Endothelial cell of umbilical vein (primary cell): ENCODE measurements at regions of chr15 and their contacts with region 1.

Region 1: DNA sequence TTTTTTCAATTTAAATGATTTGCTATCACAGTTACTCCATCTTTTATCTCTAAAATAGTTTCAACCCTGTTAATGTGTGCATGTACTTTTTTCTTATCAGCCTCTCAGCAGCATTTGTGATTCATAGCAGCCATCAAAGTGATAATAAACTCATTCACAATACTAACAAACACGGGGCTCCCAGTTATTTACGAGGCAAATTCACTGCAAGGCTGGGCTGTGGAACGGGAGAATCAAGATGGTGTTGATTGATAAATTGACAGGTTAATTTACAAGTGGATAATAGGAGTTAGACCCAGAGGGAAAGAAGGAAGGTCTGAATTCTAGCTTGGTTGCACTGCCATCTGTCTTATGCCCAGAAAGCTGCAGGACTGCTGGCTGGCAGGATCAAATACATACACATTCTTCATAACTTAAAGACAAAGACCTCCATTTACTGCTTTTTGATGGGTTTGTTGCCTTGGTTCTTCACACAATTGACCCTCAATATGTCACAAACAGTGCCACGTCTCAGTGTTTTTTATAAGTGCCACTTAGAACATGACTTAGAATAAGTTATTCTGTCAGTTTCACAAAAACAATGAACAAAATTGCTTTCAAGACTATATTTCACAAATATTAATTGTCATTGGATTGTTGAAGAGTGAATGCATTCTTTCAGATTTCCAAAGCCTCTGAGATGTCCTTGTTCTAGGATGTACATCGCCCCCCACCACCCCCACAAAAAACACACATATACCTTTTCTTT is 562.8 kb downstream of the NR2F2 start:
- DNase-seq: peak; percentile 80
- H3K4me3 ChIP-seq: no peak overlapping the region
- H3K27ac ChIP-seq: no peak overlapping the region
- H3K4me1 ChIP-seq: peaks cover 4% of the 10 kb centered on the region
- H3K27me3 ChIP-seq: no peaks in the 10 kb centered on the region
- CTCF ChIP-seq: peak; percentile 62 to 70
- POLR2A ChIP-seq: no peak

Region 2: DNA sequence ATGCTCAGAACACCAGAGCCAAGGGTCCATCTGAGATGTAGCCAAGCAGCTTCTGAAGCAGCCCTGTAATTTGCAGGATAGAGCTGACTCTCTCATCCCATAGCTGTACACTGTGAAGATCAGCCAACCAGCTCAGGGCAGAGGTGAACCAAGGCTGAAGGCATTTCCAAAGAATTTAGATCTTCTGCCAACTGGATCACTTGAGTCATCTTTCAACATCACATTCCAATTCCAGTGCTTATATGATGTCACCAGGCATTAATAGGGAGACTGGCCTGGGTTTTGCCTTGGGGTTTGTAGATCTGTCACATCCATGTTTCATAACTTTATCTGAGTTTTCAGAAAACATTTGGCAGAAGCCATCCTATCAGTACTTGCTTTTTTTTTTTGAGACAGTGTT is 464.6 kb before region 1 on chr15:
- CTCF ChIA-PET with region 1: no interaction called
- POLR2A ChIA-PET with region 1: no interaction called
- dilution Hi-C with region 1: no loop called
- intact Hi-C with region 1: loop called (anchors 10 kb)
- DNase-seq: peak; percentile 58
- H3K4me3 ChIP-seq: no peak overlapping the region
- H3K27ac ChIP-seq: peak overlapping the region; percentile 28
- H3K4me1 ChIP-seq: peaks cover 17% of the 10 kb centered on the region
- H3K27me3 ChIP-seq: no peaks in the 10 kb centered on the region
- CTCF ChIP-seq: no peak
- POLR2A ChIP-seq: no peak

Region 3: GRCh38 chr15:96585484-96586386 is 307.6 kb before region 1 on chr15:
- CTCF ChIA-PET with region 1: interaction called, 5 read pairs
- POLR2A ChIA-PET with region 1: no interaction called
- dilution Hi-C with region 1: no loop called
- intact Hi-C with region 1: loop called (anchors 5 kb)
- DNase-seq: peak; percentile 39
- H3K4me3 ChIP-seq: no peak overlapping the region
- H3K27ac ChIP-seq: no peak overlapping the region
- H3K4me1 ChIP-seq: no peaks in the 10 kb centered on the region
- H3K27me3 ChIP-seq: peaks cover 0 to 2% of the 10 kb centered on the region in 2 experiments
- CTCF ChIP-seq: peak in 1 of 2 donors; percentile 33
- POLR2A ChIP-seq: no peak

Region 4: DNA sequence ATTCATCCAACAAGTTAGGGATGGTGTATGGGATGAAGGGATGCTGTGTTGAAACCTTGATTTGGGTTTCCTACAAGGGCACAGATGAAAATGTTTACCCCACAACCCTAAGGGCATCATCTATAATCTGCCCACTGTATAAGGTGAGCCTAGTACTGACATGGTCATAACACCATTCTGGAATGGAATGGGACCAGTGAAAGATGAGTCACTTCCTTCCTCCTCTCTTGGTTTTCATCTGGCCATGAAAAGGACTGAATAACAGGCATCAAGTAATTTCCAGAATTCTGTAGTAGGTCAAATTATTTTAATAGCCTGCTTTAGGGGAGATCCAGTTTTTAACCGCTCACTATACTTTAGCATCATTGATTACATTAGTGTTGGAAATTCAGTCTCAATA is 24.2 kb before region 1 on chr15:
- CTCF ChIA-PET with region 1: no interaction called
- POLR2A ChIA-PET with region 1: no interaction called
- dilution Hi-C with region 1: no loop called
- intact Hi-C with region 1: loop called (anchors 1 kb)
- DNase-seq: peak; percentile 27
- H3K4me3 ChIP-seq: no peak overlapping the region
- H3K27ac ChIP-seq: no peak overlapping the region
- H3K4me1 ChIP-seq: peaks cover 8% of the 10 kb centered on the region
- H3K27me3 ChIP-seq: no peaks in the 10 kb centered on the region
- CTCF ChIP-seq: no peak
- POLR2A ChIP-seq: no peak

Region 5: DNA sequence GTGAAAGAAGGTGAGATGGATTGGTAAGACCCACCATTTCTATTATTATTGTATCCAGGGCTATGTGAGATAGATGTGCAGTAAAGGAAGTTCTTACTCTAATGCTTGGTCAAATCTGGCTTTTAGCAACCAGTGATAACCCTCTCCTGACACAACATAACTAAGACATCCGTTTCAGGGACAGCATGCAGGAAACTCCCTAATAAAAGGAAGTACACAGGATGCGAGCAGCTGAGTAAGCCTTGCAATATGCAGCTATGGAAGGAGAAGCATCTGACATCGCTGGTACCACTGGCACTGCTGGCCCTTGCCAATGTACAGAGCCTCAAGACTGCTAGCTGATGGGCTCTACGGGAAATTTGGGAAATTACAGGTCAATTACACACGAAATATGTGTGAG is 99.5 kb after region 1 on chr15:
- CTCF ChIA-PET with region 1: no interaction called
- POLR2A ChIA-PET with region 1: interaction called, 4 read pairs
- dilution Hi-C with region 1: no loop called
- intact Hi-C with region 1: loop called (anchors 2 kb)
- DNase-seq: peak; percentile 87
- H3K4me3 ChIP-seq: no peak overlapping the region
- H3K27ac ChIP-seq: peak overlapping the region; percentile 86
- H3K4me1 ChIP-seq: peaks cover 28% of the 10 kb centered on the region
- H3K27me3 ChIP-seq: no peaks in the 10 kb centered on the region
- CTCF ChIP-seq: no peak
- POLR2A ChIP-seq: peak; percentile 55

Region 6: DNA sequence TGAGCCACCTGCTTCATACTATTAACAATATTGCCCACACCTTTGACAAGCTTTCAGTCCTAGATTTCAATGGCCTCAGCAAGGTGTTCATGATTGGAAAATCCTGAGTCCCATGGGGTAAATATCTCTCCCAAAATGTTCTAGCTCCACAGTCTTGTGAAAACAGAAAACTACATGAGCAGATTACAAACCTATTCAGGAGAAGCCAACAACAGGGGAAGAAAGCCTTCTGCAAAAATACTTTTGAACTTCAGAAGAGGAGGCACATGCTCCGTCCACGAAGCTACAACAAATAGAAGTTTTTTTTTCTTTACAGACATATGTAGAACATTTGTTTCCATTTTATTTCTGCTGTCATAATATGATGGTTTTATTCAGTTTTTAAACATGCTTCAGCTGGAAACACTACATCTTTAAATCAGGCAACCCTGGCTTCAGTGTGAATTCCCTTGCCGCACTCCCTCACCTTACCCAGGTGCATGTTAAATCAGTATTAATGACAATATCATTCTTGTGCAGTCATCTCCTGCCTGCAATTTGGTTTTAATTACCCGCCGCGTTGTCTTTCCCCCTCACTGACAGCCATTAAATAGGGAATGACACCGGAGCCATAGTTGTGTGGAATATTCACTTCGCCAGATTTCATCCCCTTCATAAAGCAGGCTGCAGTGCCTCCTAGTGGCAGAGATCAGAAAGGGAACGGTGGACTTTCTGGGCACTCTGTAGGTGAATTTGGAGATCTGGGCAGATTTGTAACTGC is 341.7 kb after region 1 on chr15:
- CTCF ChIA-PET with region 1: interaction called, 6 read pairs
- POLR2A ChIA-PET with region 1: no interaction called
- dilution Hi-C with region 1: no loop called
- intact Hi-C with region 1: loop called (anchors 2 kb)
- DNase-seq: peak; percentile 71
- H3K4me3 ChIP-seq: no peak overlapping the region
- H3K27ac ChIP-seq: no peak overlapping the region
- H3K4me1 ChIP-seq: no peaks in the 10 kb centered on the region
- H3K27me3 ChIP-seq: peaks cover 0 to 2% of the 10 kb centered on the region in 2 experiments
- CTCF ChIP-seq: peak; percentile 75 to 90
- POLR2A ChIP-seq: no peak

Region 7: DNA sequence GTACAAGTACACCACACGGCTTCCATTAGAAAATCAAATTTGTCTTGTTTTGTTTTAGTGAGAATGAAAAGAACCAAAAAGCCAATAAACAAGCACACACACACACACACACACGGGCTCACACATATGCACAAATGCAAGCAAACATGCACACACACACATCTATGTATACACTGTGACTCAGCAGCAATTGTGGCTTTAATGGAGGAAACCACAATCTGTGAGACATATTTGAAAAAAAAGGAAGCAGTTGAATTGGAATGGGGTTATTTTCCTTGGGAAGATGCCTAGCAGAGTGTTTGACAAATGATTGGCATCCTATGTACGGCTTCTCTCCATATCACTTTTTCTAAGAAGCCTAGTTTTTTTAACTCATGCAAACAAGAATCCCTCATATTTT is 866.0 kb after region 1 on chr15:
- CTCF ChIA-PET with region 1: interaction called, 3 read pairs
- POLR2A ChIA-PET with region 1: no interaction called
- dilution Hi-C with region 1: no loop called
- intact Hi-C with region 1: loop called (anchors 5 kb)
- DNase-seq: peak; percentile 62
- H3K4me3 ChIP-seq: no peak overlapping the region
- H3K27ac ChIP-seq: no peak overlapping the region
- H3K4me1 ChIP-seq: peaks cover 4% of the 10 kb centered on the region
- H3K27me3 ChIP-seq: peaks cover 4 to 18% of the 10 kb centered on the region in 2 experiments
- CTCF ChIP-seq: no peak
- POLR2A ChIP-seq: no peak